Heart left ventricle (tissue), 16 donors: ENCODE measurements at regions of chr1 and their contacts with region 1.

Region 1: GRCh38 chr1:98460136-98460535 is 201.4 kb upstream of the SNX7 start:
- DNase-seq: no peak
- ATAC-seq: no peak
- H3K4me3 ChIP-seq: no peak overlapping the region
- H3K27ac ChIP-seq: no peak overlapping the region
- H3K4me1 ChIP-seq: no peaks in the 10 kb centered on the region
- H3K27me3 ChIP-seq: peaks cover 0 to 5% (median 0%) of the 10 kb centered on the region in 9 donors
- CTCF ChIP-seq: no peak
- POLR2A ChIP-seq: no peak

Region 2: DNA sequence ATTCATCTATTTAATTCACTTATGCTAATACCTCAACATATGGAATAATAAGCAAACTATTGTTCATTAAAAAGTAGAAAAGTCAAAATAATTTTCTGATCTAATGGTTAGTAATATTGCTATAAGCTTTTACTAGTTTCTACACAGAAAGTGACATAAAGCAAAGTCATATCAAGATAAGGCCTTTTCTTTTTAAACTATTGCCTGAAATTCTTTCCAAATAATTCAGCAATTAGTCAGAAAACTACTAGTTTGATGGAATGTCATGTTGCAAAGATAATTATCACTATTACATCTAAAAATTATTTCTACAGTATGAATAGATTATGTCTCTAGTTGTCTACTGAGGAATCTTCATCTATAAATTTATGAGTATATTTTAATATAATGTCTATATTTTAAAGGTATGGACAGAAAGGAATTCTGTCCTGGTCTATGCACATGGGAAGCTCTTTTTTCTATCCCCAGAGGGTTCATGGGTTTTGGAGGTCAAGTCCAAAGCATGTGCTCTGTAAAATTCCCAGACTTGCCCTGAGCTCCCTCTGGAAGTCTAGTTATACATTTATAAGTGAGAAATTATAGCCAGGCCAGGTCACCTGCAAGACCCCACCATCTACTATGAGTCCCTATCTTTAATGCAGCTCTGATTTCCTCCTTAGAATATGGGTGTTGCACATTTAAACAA is 454.7 kb before region 1 on chr1:
- intact Hi-C with region 1: loop called in 1 of 10 experiments (anchors 5 kb)
- DNase-seq: no peak
- ATAC-seq: no peak
- H3K4me3 ChIP-seq: no peak overlapping the region
- H3K27ac ChIP-seq: no peak overlapping the region
- H3K4me1 ChIP-seq: no peaks in the 10 kb centered on the region
- H3K27me3 ChIP-seq: no peaks in the 10 kb centered on the region
- CTCF ChIP-seq: no peak
- POLR2A ChIP-seq: no peak